B cell (primary cell): ENCODE measurements at regions of chr7 and their contacts with region 1.

Region 1: DNA sequence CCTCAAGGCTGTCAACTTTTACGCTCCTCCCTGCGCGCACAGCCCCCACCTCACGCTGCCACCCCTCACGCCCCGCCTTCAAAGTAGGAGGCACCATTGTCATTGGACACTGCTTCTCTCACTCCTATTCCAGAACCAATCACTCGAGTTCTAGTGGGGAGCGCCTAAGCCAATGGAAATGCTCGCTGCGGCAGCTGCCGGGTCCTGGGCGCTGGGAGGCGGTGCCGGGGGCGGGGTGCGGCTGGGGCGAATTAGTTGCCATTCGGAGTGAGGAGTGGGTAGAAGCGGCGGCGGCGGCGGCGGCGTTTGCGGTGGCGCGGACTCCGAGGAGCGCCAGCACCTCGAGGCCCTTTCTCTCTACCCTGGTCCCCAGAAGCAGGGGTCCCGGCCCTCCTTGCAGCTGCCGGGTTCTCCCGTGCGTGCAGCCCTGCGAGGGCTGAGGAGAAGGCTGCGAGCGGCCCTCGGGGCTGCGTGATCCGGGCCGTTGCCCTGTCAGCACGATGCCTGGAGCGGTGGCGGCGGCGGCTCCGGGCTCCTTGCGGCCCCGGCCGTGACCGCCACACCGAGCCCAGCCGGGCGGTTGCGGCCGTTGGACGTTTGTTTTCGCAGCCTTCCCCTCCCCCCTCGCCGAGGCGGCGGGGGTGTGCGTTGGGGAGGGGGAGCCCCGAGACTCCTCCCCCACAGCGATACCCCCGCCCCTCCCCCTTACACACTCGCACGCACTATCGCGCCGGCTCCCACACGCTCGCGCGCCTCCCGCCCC is at the start of gene GLCCI1:
- DNase-seq: peak; percentile 97
- ATAC-seq: peak; percentile 86
- H3K4me3 ChIP-seq: peak within 1 kb of the TSS; percentile 74 to 95 (median 87)
- H3K4me3 Mint-ChIP-seq: peak within 1 kb of the TSS; percentile 92
- H3K27ac ChIP-seq: peak within 1 kb of the TSS; percentile 82 to 83
- H3K27ac Mint-ChIP-seq: peak within 1 kb of the TSS; percentile 93
- H3K4me1 ChIP-seq: peaks cover 35 to 44% of the 10 kb centered on the region in 2 donors
- H3K4me1 Mint-ChIP-seq: peaks cover 34% of the 10 kb centered on the region
- H3K27me3 ChIP-seq: no peaks in the 10 kb centered on the region
- H3K27me3 Mint-ChIP-seq: no peaks in the 10 kb centered on the region
- CTCF ChIP-seq: no peak
- total RNA-seq, gene GLCCI1: 45.7 and 50.3 TPM in 2 replicates

Region 2: GRCh38 chr7:7182156-7183060 is 786.3 kb before region 1 on chr7 and contains the start of gene C1GALT1:
- CTCF ChIA-PET with region 1: no interaction called
- POLR2A ChIA-PET with region 1: no interaction called
- intact Hi-C with region 1: loop called (anchors 5 kb)
- DNase-seq: peak; percentile 99
- ATAC-seq: peak; percentile 79
- H3K4me3 ChIP-seq: peak within 1 kb of the TSS; percentile 85 to 97 (median 91)
- H3K4me3 Mint-ChIP-seq: peak within 1 kb of the TSS; percentile 97
- H3K27ac ChIP-seq: peak within 1 kb of the TSS; percentile 89 to 93
- H3K27ac Mint-ChIP-seq: peak within 1 kb of the TSS; percentile 98
- H3K4me1 ChIP-seq: peaks cover 29 to 41% of the 10 kb centered on the region in 2 donors
- H3K4me1 Mint-ChIP-seq: peaks cover 30% of the 10 kb centered on the region
- H3K27me3 ChIP-seq: no peaks in the 10 kb centered on the region
- H3K27me3 Mint-ChIP-seq: no peaks in the 10 kb centered on the region
- CTCF ChIP-seq: peak; percentile 64
- total RNA-seq, gene C1GALT1: 59.8 and 66.8 TPM in 2 replicates

Region 3: GRCh38 chr7:7614018-7614741 is 354.5 kb before region 1 on chr7:
- CTCF ChIA-PET with region 1: no interaction called
- POLR2A ChIA-PET with region 1: no interaction called
- intact Hi-C with region 1: no loop called
- DNase-seq: no peak
- ATAC-seq: no peak
- H3K4me3 ChIP-seq: no peak overlapping the region
- H3K4me3 Mint-ChIP-seq: no peak overlapping the region
- H3K27ac ChIP-seq: peak overlapping the region in 1 of 2 donors; percentile 2
- H3K27ac Mint-ChIP-seq: no peak overlapping the region
- H3K4me1 ChIP-seq: peaks cover 0 to 5% of the 10 kb centered on the region in 2 donors
- H3K4me1 Mint-ChIP-seq: peaks cover 11% of the 10 kb centered on the region
- H3K27me3 ChIP-seq: no peaks in the 10 kb centered on the region
- H3K27me3 Mint-ChIP-seq: no peaks in the 10 kb centered on the region
- CTCF ChIP-seq: no peak

Region 4: GRCh38 chr7:7640221-7641128 is 328.2 kb before region 1 on chr7 and contains the start of gene UMAD1:
- CTCF ChIA-PET with region 1: no interaction called
- POLR2A ChIA-PET with region 1: interaction called, 9 read pairs
- intact Hi-C with region 1: loop called (anchors 1 kb)
- DNase-seq: peak; percentile 99
- ATAC-seq: peak; percentile 91
- H3K4me3 ChIP-seq: peak within 1 kb of the TSS; percentile 83 to 99 (median 93)
- H3K4me3 Mint-ChIP-seq: peak within 1 kb of the TSS; percentile 87
- H3K27ac ChIP-seq: peak within 1 kb of the TSS; percentile 98 to 99
- H3K27ac Mint-ChIP-seq: peak within 1 kb of the TSS; percentile 98
- H3K4me1 ChIP-seq: peaks cover 15 to 17% of the 10 kb centered on the region in 2 donors
- H3K4me1 Mint-ChIP-seq: peaks cover 45% of the 10 kb centered on the region
- H3K27me3 ChIP-seq: no peaks in the 10 kb centered on the region
- H3K27me3 Mint-ChIP-seq: no peaks in the 10 kb centered on the region
- CTCF ChIP-seq: no peak
- total RNA-seq, gene UMAD1: 25.9 and 27.3 TPM in 2 replicates

Region 5: DNA sequence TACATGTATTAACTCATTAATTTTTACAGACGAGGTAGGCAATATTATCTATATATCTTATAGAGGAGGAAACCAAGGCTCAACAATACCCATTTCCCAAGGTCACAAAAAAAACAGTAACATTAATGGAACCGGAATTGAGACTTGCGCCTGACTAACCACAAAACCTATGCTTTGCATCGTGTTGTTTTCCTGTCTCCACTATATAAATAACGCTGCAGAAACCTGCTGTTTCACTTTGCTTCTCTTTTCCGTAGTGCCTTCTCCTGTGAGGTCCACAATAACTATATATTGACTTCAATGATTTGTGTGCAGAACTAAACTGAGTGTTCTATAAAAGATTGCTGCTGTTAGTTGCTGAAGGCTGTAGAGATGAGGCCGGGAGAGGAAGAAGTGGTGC is 152.6 kb before region 1 on chr7:
- CTCF ChIA-PET with region 1: no interaction called
- POLR2A ChIA-PET with region 1: interaction called, 4 read pairs
- intact Hi-C with region 1: loop called (anchors 2 kb)
- DNase-seq: peak; percentile 73
- ATAC-seq: peak; percentile 74
- H3K4me3 ChIP-seq: peak overlapping the region in 4 of 5 experiments; percentile 11 to 57 (median 40)
- H3K4me3 Mint-ChIP-seq: peak overlapping the region; percentile 71
- H3K27ac ChIP-seq: peak overlapping the region; percentile 40 to 56
- H3K27ac Mint-ChIP-seq: peak overlapping the region; percentile 82
- H3K4me1 ChIP-seq: peaks cover 61% of the 10 kb centered on the region in 2 donors
- H3K4me1 Mint-ChIP-seq: peaks cover 72% of the 10 kb centered on the region
- H3K27me3 ChIP-seq: no peaks in the 10 kb centered on the region
- H3K27me3 Mint-ChIP-seq: no peaks in the 10 kb centered on the region
- CTCF ChIP-seq: no peak

Region 6: GRCh38 chr7:7932580-7932979 is 36.1 kb before region 1 on chr7:
- CTCF ChIA-PET with region 1: no interaction called
- POLR2A ChIA-PET with region 1: no interaction called
- intact Hi-C with region 1: no loop called
- DNase-seq: no peak
- ATAC-seq: no peak
- H3K4me3 ChIP-seq: no peak overlapping the region
- H3K4me3 Mint-ChIP-seq: no peak overlapping the region
- H3K27ac ChIP-seq: no peak overlapping the region
- H3K27ac Mint-ChIP-seq: no peak overlapping the region
- H3K4me1 ChIP-seq: no peaks in the 10 kb centered on the region
- H3K4me1 Mint-ChIP-seq: no peaks in the 10 kb centered on the region
- H3K27me3 ChIP-seq: no peaks in the 10 kb centered on the region
- H3K27me3 Mint-ChIP-seq: no peaks in the 10 kb centered on the region
- CTCF ChIP-seq: no peak

Region 7: GRCh38 chr7:7989133-7989984 is 20.6 kb after region 1 on chr7:
- CTCF ChIA-PET with region 1: no interaction called
- POLR2A ChIA-PET with region 1: no interaction called
- intact Hi-C with region 1: no loop called
- DNase-seq: no peak
- ATAC-seq: no peak
- H3K4me3 ChIP-seq: no peak overlapping the region
- H3K4me3 Mint-ChIP-seq: peak overlapping the region; percentile 65
- H3K27ac ChIP-seq: peak overlapping the region in 1 of 2 donors; percentile 40
- H3K27ac Mint-ChIP-seq: peak overlapping the region; percentile 38
- H3K4me1 ChIP-seq: peaks cover 0 to 8% of the 10 kb centered on the region in 2 donors
- H3K4me1 Mint-ChIP-seq: peaks cover 43% of the 10 kb centered on the region
- H3K27me3 ChIP-seq: no peaks in the 10 kb centered on the region
- H3K27me3 Mint-ChIP-seq: no peaks in the 10 kb centered on the region
- CTCF ChIP-seq: no peak

Region 8: GRCh38 chr7:8035647-8036518 is 67.2 kb after region 1 on chr7:
- CTCF ChIA-PET with region 1: interaction called, 8 read pairs
- POLR2A ChIA-PET with region 1: interaction called, 4 read pairs
- intact Hi-C with region 1: loop called (anchors 1 kb)
- DNase-seq: peak; percentile 54
- ATAC-seq: peak; percentile 78
- H3K4me3 ChIP-seq: no peak overlapping the region
- H3K4me3 Mint-ChIP-seq: no peak overlapping the region
- H3K27ac ChIP-seq: peak overlapping the region in 1 of 2 donors; percentile 20
- H3K27ac Mint-ChIP-seq: peak overlapping the region; percentile 77
- H3K4me1 ChIP-seq: peaks cover 3 to 5% of the 10 kb centered on the region in 2 donors
- H3K4me1 Mint-ChIP-seq: peaks cover 14% of the 10 kb centered on the region
- H3K27me3 ChIP-seq: no peaks in the 10 kb centered on the region
- H3K27me3 Mint-ChIP-seq: no peaks in the 10 kb centered on the region
- CTCF ChIP-seq: peak; percentile 75

Region 9: DNA sequence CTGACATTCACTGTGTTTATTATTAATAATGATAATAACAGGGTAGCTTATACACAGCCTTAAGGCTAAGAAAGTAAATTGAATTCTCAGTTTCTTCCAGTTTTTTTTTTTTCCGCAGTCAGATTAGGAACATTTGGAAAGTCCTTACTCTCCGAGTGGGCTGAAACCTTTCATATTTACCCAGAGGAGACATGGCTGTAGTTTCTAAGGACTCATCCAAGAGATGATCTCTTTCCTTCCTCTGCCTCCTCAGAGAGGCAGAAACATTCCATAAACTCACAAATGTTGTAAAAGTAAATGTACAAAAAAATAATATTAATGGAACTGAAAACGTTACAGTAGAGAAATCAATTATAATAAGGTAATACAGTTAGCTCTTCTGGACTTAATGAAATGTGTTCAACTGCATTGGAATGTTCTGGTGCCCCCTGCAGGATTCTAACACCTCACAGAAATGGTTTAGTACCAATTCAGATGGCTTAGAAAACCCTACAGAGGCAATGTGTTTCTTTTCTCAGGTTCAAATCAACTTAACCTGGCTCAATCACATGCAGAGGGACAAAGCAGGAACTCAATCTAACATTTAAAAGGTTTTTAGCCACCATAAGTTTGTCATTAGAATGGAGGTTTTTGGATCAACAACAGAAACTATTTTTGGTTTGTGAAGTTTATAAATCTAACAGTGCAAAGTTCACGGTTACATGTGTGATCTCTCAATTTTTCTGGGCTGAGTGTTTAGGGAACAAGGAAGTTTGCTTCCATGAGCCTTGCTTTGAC is 221.6 kb after region 1 on chr7:
- CTCF ChIA-PET with region 1: interaction called, 16 read pairs
- POLR2A ChIA-PET with region 1: no interaction called
- intact Hi-C with region 1: loop called (anchors 5 kb)
- DNase-seq: peak; percentile 78
- ATAC-seq: peak; percentile 73
- H3K4me3 ChIP-seq: no peak overlapping the region
- H3K4me3 Mint-ChIP-seq: no peak overlapping the region
- H3K27ac ChIP-seq: no peak overlapping the region
- H3K27ac Mint-ChIP-seq: no peak overlapping the region
- H3K4me1 ChIP-seq: peaks cover 17 to 18% of the 10 kb centered on the region in 2 donors
- H3K4me1 Mint-ChIP-seq: peaks cover 18% of the 10 kb centered on the region
- H3K27me3 ChIP-seq: no peaks in the 10 kb centered on the region
- H3K27me3 Mint-ChIP-seq: no peaks in the 10 kb centered on the region
- CTCF ChIP-seq: peak; percentile 91

Region 10: DNA sequence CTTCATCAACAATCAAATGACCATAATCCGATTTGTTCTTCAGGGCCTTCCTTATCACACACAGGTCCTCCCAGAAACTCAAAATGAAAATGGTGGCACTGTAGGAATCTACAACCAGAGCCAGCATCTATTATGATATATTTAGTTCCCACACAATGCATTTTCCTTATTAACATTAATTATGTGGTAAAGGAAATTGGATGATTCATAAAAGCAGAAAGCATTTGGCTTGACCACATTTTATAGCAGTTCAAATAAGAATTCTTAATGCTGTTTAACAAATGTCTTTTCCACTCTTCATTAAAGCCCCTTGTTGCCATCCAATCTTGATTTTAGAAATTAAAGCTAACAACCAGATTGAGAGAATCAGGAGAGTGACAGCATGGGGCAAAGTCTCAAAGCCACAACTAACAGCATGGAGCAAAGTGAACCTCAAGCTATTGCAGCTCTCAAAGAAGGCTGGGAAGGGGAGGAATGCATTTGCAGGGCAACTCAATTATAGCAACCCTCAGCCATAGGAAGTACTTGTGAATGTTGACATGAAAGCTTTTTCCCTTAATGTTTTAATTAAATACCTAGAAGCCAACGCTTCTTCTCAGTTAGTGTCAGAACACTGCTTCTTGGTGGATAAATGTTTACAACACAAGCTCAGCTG is 1013.7 kb after region 1 on chr7:
- CTCF ChIA-PET with region 1: no interaction called
- POLR2A ChIA-PET with region 1: no interaction called
- intact Hi-C with region 1: no loop called
- DNase-seq: no peak
- ATAC-seq: no peak
- H3K4me3 ChIP-seq: no peak overlapping the region
- H3K4me3 Mint-ChIP-seq: no peak overlapping the region
- H3K27ac ChIP-seq: no peak overlapping the region
- H3K27ac Mint-ChIP-seq: no peak overlapping the region
- H3K4me1 ChIP-seq: no peaks in the 10 kb centered on the region
- H3K4me1 Mint-ChIP-seq: no peaks in the 10 kb centered on the region
- H3K27me3 ChIP-seq: no peaks in the 10 kb centered on the region
- H3K27me3 Mint-ChIP-seq: no peaks in the 10 kb centered on the region
- CTCF ChIP-seq: no peak